ENCODE measurements at regions of chr1 and their contacts with region 1.

Region 1: DNA sequence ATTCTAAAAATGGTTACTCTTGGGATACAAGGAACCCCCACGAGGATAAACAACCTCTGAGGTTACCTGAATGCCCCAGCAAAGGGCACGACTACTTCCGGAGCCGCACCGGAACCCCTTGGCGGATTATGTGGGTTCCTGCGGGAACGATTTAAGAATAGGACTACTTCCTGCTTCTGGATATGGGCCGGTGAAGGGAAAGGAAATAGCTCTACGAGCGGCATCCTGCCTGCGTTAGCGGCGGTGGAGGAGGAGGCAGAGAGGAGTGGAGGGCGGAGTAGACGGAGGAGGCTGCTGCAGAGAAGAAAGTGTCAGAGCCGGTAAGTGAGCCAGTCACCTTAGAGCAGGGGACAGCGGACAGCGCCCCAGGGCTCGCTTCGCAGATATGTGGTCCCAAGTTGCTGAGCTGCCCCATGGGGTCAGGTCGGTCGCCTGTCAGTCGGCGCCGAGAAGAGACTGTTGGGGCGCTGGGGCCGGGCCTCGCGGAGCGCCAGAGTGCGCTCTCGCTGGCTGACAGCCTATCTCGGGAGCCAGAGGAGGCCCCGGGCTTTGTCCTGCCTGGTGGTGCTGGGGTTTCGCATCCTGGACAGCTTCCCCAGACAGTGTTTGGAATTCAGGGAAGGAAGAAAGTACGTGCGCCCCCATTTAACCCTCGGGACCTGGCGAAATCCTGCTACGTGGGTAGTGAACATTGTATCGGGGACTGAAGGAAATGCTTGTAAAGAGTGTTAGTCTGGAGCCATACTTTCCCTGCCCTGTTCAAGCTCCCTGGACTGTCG is at the start of gene KLHL20:
- DNase-seq: peak; percentile 81 to 83 (median 82)
- ATAC-seq: peak; percentile 96 to 99 (median 99)
- H3K4me3 ChIP-seq: peak within 1 kb of the TSS; percentile 73 to 95 (median 81)
- H3K27ac ChIP-seq: peak within 1 kb of the TSS; percentile 76 to 95 (median 90)
- H3K4me1 ChIP-seq: peaks cover 0 to 30% (median 19%) of the 10 kb centered on the region in 12 donors
- H3K27me3 ChIP-seq: peaks cover 0 to 13% (median 0%) of the 10 kb centered on the region in 9 donors
- CTCF ChIP-seq: peak in 3 of 12 donors; percentile 18 to 32 (median 21)
- POLR2A ChIP-seq: peak in 1 of 2 donors; percentile 40
- total RNA-seq, gene KLHL20: 14.5 to 20.1 (median 18.3) TPM

Region 2: DNA sequence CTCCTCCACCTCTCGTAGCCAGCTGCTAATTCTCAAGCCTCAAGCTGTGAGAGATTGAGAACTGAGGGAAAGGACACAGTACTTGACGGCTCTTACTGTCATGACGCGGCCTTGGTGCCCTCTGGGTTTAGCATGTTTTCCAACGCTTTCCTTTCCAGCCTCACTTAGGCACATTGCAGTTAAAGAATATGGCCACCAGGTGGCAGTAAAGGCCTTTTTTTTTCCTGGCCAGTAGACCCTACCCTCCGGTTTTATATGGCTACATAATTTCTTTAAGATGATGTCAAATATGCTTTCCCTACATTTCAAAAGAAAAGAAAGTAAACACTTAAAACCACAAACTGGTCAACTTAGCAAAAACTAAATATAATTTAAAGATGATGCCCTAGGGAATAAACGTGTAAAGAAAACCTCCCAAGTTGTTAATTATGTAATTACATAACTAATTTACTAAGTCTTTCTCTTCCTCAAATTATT is 294.6 kb before region 1 on chr1:
- intact Hi-C with region 1: loop called in 2 of 10 experiments (anchors 5 kb)
- DNase-seq: peak in 4 of 5 donors; percentile 40 to 56 (median 49)
- ATAC-seq: peak; percentile 32 to 86 (median 82)
- H3K4me3 ChIP-seq: peak overlapping the region in 1 of 12 donors; percentile 9
- H3K27ac ChIP-seq: peak overlapping the region in 3 of 12 donors; percentile 26 to 33 (median 33)
- H3K4me1 ChIP-seq: peaks cover 0 to 24% (median 0%) of the 10 kb centered on the region in 12 donors
- H3K27me3 ChIP-seq: no peaks in the 10 kb centered on the region
- CTCF ChIP-seq: peak; percentile 83 to 97 (median 92)
- POLR2A ChIP-seq: no peak

Region 3: DNA sequence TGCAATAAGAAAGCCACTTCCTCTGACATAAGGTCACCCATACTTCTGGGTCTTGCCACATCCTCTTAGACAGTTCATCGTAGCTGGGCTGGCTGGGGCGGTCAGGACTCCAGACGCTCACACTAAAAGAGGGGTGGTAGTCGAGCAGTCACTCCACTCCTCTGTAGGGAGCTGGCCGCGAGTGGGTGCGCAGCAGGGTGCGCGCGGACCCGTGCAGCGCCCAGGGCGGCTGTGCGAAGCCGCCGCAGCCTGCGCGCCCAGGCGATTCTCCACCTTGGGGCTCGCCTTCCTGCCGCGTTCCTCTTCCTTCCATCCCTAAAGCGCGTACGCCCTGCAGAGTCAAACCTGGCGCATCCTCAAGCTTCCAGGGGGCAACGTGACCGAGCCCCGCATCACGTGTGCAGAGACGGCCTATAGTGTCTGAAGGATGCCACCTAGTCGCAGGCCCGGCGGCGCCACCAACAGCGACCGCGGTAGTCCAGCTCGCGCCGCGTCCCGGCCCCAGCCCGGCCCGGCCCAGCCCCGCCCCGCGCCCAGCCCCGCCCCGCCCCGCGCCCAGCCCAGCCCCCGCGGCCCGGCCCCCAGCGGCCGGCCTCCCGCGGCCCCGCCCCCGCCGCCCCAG is 238.2 kb before region 1 on chr1:
- intact Hi-C with region 1: loop called in 4 of 10 experiments (anchors 2 to 10 kb)
- DNase-seq: peak; percentile 92 to 97 (median 94)
- ATAC-seq: peak; percentile 88 to 92 (median 91)
- H3K4me3 ChIP-seq: peak overlapping the region; percentile 52 to 96 (median 79)
- H3K27ac ChIP-seq: peak overlapping the region; percentile 66 to 99 (median 96)
- H3K4me1 ChIP-seq: peaks cover 0 to 61% (median 50%) of the 10 kb centered on the region in 12 donors
- H3K27me3 ChIP-seq: no peaks in the 10 kb centered on the region
- CTCF ChIP-seq: peak in 4 of 12 donors; percentile 15 to 32 (median 24)
- POLR2A ChIP-seq: peak in 1 of 2 donors; percentile 30

Region 4: DNA sequence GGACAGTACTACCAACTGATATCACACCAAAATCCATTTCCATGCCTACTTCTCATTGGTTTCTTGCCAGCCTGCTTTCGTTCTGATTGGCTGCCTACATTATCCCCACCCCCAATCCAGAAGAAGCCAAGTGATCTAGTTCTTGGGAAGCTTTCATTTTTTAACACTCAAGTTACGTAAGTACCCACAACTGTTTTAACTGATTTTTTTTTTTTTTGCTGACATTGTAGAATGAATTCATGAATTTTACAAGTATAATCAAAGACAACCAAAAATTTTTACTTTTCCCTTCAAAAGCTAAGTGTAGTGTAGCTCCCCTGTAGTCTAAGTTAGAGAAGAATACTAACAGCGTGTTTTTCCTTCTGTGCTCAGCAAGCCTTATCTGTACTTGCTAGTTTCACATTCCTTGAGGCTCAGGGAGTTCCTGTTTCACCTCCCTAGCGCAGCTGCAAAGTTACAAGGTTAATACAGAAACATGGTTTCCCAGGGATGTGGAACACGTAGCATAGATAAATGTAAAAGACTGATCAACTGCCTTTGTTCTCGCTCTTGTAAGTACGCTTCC is 111.8 kb before region 1 on chr1 and contains the start of gene SLC9C2:
- intact Hi-C with region 1: loop called in 1 of 10 experiments (anchors 5 kb)
- DNase-seq: peak in 1 of 5 donors; percentile 28
- ATAC-seq: peak in 3 of 4 donors; percentile 45 to 86 (median 63)
- H3K4me3 ChIP-seq: peak within 1 kb of the TSS; percentile 7 to 56 (median 46)
- H3K27ac ChIP-seq: peak within 1 kb of the TSS in 10 of 12 donors; percentile 8 to 64 (median 40)
- H3K4me1 ChIP-seq: peaks cover 0 to 11% (median 0%) of the 10 kb centered on the region in 12 donors
- H3K27me3 ChIP-seq: no peaks in the 10 kb centered on the region
- CTCF ChIP-seq: no peak
- POLR2A ChIP-seq: no peak
- total RNA-seq, gene SLC9C2: 0.09 to 1.8 (median 0.17) TPM in 3 of 9 donors, not detected in the others

Region 5: GRCh38 chr1:173824331-173825081 is 109.6 kb after region 1 on chr1 and contains the starts of genes CENPL and DARS2:
- intact Hi-C with region 1: loop called in 2 of 10 experiments (anchors 5 to 10 kb)
- DNase-seq: peak; percentile 96 to 99 (median 96)
- ATAC-seq: peak; percentile 98 to 99 (median 99)
- H3K4me3 ChIP-seq: peak within 1 kb of the TSS; percentile 58 to 98 (median 78)
- H3K27ac ChIP-seq: peak within 1 kb of the TSS; percentile 87 to 97 (median 93)
- H3K4me1 ChIP-seq: peaks cover 0 to 29% (median 8%) of the 10 kb centered on the region in 12 donors
- H3K27me3 ChIP-seq: no peaks in the 10 kb centered on the region
- CTCF ChIP-seq: no peak
- POLR2A ChIP-seq: peak in 1 of 2 donors; percentile 21
- total RNA-seq, gene CENPL: 1.7 to 5.8 (median 3.5) TPM
- total RNA-seq, gene DARS2: 10.9 to 25.1 (median 15.9) TPM

Region 6: DNA sequence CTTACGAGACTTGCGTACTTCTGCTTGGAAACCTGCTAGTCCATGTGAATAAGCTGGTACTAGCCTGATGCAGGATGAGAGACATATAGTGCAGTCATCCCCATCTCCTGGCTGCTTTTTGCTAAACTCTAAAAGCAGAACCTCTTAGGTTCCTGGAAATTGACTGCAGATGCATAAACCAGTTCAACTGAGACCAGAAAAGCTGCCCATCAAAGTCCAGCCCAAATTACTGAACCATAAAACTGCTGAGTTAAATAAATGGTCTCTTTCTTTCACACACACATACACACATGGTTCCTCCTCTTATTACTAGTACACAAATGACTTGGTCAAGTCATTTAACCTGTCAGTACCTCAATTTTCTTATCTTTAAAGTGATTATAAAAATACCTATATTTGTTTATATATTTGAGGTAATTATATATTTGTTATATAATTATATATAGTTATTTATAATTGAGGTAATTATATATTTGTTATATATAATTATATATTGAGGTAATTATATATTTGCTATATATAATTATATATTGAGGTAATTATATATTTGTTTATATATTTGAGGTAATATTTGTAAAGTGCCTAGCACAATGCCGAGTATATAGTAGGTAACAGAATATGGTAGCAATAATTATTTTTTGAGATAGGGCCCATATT is 419.2 kb after region 1 on chr1:
- intact Hi-C with region 1: no loop called
- DNase-seq: no peak
- ATAC-seq: no peak
- H3K4me3 ChIP-seq: no peak overlapping the region
- H3K27ac ChIP-seq: no peak overlapping the region
- H3K4me1 ChIP-seq: no peaks in the 10 kb centered on the region
- H3K27me3 ChIP-seq: no peaks in the 10 kb centered on the region
- CTCF ChIP-seq: no peak
- POLR2A ChIP-seq: no peak

Measured in heart left ventricle (tissue), 16 donors.